ENCODE measurements at regions of chr1 and their contacts with region 1.

Region 1: DNA sequence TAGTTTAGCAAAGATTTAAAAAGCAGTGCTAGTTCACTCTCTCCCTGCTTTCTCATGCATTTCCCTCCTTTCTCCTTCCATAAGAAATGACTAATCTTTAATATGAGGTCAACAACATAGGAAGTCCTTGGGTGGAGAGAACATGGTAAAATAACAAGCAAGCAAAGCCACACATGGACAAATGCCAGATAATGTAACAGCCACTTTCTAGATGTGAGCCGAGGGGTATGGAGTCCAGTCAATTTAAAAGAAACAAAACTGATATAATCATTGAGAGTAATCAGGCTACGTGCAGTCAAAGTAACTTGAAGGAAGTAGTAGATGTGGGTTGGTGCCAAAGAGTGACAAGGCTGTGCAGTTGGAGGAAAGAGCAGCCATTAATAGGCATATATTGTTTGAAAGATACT is 69.6 kb downstream of the DUSP10 start:
- DNase-seq: peak; percentile 87
- H3K4me3 Mint-ChIP-seq: no peak overlapping the region
- H3K27ac Mint-ChIP-seq: peak overlapping the region; percentile 46
- H3K4me1 Mint-ChIP-seq: peaks cover 38% of the 10 kb centered on the region
- H3K27me3 Mint-ChIP-seq: no peaks in the 10 kb centered on the region
- CTCF ChIP-seq: no peak

Region 2: GRCh38 chr1:221444346-221444745 is 227.9 kb before region 1 on chr1:
- CTCF ChIA-PET with region 1: no interaction called
- POLR2A ChIA-PET with region 1: no interaction called
- intact Hi-C with region 1: no loop called
- DNase-seq: peak; percentile 57
- H3K4me3 Mint-ChIP-seq: no peak overlapping the region
- H3K27ac Mint-ChIP-seq: no peak overlapping the region
- H3K4me1 Mint-ChIP-seq: peaks cover 28% of the 10 kb centered on the region
- H3K27me3 Mint-ChIP-seq: no peaks in the 10 kb centered on the region
- CTCF ChIP-seq: no peak

Region 3: DNA sequence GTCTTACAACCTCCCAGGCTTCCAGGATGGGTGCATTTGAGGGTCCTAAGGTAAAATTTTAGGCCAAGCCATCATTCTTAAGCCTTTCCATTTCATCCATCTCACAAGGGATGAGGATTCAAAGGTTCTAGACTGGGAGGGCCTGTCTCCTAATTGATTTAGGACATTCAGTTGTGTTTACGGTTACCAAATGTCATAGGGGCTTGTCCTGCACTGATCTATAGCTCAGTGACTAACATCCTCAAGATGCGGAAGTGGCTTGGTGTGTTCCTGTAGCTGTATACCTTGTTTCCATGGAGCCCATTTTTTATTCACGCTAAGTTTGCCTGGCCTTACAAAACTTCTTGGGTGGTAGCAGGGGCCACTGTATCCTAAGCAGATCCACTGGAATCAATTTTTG is 16.9 kb after region 1 on chr1:
- CTCF ChIA-PET with region 1: interaction called, 4 read pairs
- POLR2A ChIA-PET with region 1: interaction called, 11 read pairs
- intact Hi-C with region 1: no loop called
- DNase-seq: no peak
- H3K4me3 Mint-ChIP-seq: no peak overlapping the region
- H3K27ac Mint-ChIP-seq: no peak overlapping the region
- H3K4me1 Mint-ChIP-seq: no peaks in the 10 kb centered on the region
- H3K27me3 Mint-ChIP-seq: no peaks in the 10 kb centered on the region
- CTCF ChIP-seq: no peak

Measured in MCF 10A (cell line).